ENCODE measurements at regions of chr15 and their contacts with region 1.

Region 1: DNA sequence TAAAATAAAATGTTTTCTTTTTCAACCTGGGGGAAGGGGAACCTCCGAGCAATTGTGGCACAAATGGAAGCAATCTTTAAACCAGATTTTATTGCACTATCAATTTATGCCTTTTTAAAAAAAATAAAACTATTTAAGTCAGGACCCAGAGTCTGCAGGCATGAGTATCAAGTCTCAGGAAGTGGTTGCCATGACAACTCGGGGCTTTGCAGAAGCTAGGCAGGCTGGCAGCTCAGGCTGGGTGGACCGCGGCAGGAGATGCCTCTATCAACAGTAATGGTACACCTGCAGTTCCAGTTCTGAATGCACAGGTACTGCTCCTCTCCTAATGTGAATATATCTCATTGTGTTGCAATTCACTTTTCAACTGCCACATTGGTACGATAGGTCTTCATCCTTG is 447.7 kb downstream of the GABRG3 start:
- DNase-seq: no peak
- H3K4me3 ChIP-seq: no peak overlapping the region
- H3K27ac ChIP-seq: no peak overlapping the region
- H3K4me1 ChIP-seq: peaks cover 5 to 6% of the 10 kb centered on the region in 2 donors
- H3K27me3 ChIP-seq: no peaks in the 10 kb centered on the region
- CTCF ChIP-seq: no peak
- POLR2A ChIP-seq: no peak

Region 2: GRCh38 chr15:27365441-27365840 is 53.3 kb before region 1 on chr15:
- intact Hi-C with region 1: no loop called
- DNase-seq: no peak
- H3K4me3 ChIP-seq: no peak overlapping the region
- H3K27ac ChIP-seq: no peak overlapping the region
- H3K4me1 ChIP-seq: no peaks in the 10 kb centered on the region
- H3K27me3 ChIP-seq: no peaks in the 10 kb centered on the region
- CTCF ChIP-seq: no peak
- POLR2A ChIP-seq: no peak

Region 3: DNA sequence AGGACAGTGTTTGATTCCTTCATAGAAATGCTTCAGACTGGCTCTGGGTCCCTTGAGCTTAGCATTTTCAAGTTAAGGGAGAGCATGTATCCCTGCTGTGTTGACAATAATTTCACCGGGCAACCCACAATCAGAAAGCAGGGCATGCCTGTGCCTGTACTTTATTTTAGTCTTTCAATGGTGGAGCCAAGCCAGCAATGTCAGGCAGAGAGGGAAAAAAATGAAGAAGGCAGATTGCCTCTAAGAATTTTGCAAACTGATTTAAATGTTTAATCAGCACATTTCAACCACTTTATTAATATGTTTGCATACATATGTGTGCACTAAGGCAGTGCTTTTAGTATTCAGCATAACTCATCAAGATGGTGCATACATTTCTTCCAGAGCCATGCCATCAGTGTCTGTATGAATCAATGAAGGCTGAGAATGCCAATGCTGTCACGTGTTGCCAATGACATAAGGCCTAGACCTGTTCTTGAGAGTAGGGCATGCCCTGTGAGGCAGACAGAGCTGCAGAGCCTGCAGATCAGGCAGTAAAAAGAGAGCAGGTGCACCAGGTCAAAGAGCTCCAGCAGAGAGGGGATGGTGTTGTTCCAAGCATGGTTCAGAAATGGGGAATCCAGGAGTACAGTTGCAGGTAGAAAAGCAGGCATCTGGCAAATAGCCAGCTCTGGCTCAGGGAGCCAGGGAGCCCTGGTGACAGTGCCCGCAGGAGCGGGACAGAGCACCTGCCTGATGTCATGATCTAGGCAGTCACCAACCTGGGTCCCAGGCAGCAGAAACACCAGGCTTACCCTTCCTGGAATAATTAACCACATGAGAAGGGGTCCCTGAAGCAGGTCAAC is 60.8 kb after region 1 on chr15:
- intact Hi-C with region 1: loop called (anchors 10 kb)
- DNase-seq: peak; percentile 47 to 56
- H3K4me3 ChIP-seq: no peak overlapping the region
- H3K27ac ChIP-seq: no peak overlapping the region
- H3K4me1 ChIP-seq: no peaks in the 10 kb centered on the region
- H3K27me3 ChIP-seq: no peaks in the 10 kb centered on the region
- CTCF ChIP-seq: no peak
- POLR2A ChIP-seq: no peak

Region 4: DNA sequence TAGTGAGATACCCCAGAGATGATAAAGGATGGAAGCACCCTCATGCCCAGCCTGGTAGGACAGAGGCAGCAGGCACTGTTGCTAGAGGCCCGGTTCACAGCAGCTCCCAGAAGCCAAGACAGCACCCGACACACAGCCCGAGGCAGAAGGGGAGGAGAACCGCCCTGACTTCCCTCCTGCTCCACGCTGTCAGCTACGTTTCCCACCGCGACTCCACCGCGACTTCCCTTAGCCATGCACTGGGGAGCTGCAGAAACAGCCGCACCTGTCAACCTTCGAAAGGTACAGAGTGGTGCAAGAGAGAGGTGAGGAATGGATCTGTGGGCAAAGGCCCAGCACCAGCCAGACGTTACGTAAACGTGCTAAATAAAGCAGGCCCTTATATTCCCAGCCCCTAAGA is 81.5 kb after region 1 on chr15:
- intact Hi-C with region 1: no loop called
- DNase-seq: no peak
- H3K4me3 ChIP-seq: no peak overlapping the region
- H3K27ac ChIP-seq: no peak overlapping the region
- H3K4me1 ChIP-seq: no peaks in the 10 kb centered on the region
- H3K27me3 ChIP-seq: no peaks in the 10 kb centered on the region
- CTCF ChIP-seq: no peak
- POLR2A ChIP-seq: no peak

Measured in thyroid gland (tissue), 4 donors.